OCI-LY7 (cell line): ENCODE measurements at regions of chrX and their contacts with region 1.

Region 1: GRCh38 chrX:57951666-57952319 is 41.5 kb upstream of the ZXDA start:
- DNase-seq: peak; percentile 94
- H3K4me3 ChIP-seq: peak overlapping the region; percentile 45
- H3K27ac ChIP-seq: peak overlapping the region; percentile 97
- H3K4me1 ChIP-seq: peaks cover 35% of the 10 kb centered on the region
- CTCF ChIP-seq: no peak

Region 2: GRCh38 chrX:57595381-57595811 is 356.4 kb before region 1 on chrX:
- CTCF ChIA-PET with region 1: no interaction called
- POLR2A ChIA-PET with region 1: no interaction called
- intact Hi-C with region 1: loop called (anchors 10 kb)
- DNase-seq: no peak
- H3K4me3 ChIP-seq: peak overlapping the region; percentile 42
- H3K27ac ChIP-seq: no peak overlapping the region
- H3K4me1 ChIP-seq: peaks cover 9% of the 10 kb centered on the region
- CTCF ChIP-seq: no peak

Region 3: DNA sequence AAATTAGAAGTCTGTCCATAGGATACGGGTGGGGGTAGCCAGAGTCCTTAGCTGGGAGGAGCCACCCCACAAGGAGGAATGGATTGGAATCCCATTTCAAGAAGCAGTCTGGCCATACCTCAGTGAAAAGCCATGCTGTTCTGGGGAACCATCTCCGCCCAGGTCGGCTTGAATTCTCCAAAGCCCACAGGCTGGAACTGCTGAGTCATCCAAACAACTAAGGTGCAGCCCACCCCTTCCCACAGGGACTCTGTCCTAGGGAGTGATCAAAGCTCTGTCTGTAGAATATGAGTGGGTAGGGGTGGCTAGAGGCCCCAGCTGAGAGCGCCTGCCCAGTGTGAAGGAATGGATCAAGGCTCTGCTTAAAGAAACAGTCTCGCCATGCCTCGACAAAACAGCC is 80.3 kb before region 1 on chrX:
- CTCF ChIA-PET with region 1: no interaction called
- POLR2A ChIA-PET with region 1: no interaction called
- intact Hi-C with region 1: no loop called
- DNase-seq: no peak
- H3K4me3 ChIP-seq: no peak overlapping the region
- H3K27ac ChIP-seq: no peak overlapping the region
- H3K4me1 ChIP-seq: no peaks in the 10 kb centered on the region
- CTCF ChIP-seq: no peak

Region 4: DNA sequence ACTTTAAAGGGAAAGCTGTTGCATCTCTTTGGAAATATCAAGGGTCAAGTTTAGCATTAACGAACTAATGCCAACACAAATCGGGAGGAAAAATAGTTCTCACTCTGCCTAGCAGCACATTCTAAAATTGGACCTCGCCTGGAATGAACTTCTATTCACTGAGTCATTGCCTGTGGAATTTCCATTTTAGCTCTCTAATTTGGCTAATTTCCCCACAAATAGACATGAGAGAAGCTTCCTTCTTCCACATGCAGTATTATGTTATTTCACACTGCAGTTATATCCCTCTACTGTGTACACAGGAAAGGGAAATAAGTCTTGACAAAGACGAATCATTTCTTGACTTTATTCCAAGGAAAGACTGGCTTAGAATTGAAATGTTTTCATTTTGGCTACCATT is 50.8 kb before region 1 on chrX:
- CTCF ChIA-PET with region 1: no interaction called
- POLR2A ChIA-PET with region 1: no interaction called
- intact Hi-C with region 1: no loop called
- DNase-seq: no peak
- H3K4me3 ChIP-seq: no peak overlapping the region
- H3K27ac ChIP-seq: no peak overlapping the region
- H3K4me1 ChIP-seq: no peaks in the 10 kb centered on the region
- CTCF ChIP-seq: no peak

Region 5: DNA sequence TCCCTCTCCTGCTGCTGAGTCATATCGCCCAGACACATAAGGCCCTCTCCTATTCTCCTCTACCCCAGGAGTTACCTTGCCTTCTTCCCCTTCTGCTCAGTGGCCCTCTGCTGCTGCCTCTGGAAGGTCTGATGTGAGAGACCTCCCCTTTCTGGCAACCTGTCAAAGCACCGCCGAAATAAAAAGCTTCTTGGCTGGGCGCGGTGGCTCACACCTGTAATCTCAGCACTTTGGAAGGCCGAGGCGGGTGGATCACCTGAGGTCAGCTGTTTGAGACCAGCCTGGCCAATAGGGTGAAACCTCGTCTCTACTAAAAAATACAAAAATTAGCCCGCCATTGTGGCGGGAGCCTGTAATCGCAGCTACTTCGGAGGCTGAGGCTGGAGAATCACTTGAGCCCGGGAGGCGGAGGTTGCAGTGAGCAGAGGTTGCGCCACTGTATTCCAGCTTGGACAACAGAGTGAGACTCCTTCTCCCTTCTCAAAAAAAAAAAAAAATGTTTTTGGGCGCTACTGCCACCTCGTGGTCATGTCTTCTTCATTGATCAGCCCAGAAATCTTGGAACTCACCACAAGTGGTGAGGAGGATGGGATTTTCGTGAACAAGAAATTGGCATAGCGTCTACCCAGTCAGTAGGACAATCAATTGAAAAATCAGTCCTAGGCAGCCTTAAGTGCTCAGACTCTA is 32.9 kb before region 1 on chrX:
- CTCF ChIA-PET with region 1: no interaction called
- POLR2A ChIA-PET with region 1: no interaction called
- intact Hi-C with region 1: no loop called
- DNase-seq: peak; percentile 36
- H3K4me3 ChIP-seq: no peak overlapping the region
- H3K27ac ChIP-seq: no peak overlapping the region
- H3K4me1 ChIP-seq: no peaks in the 10 kb centered on the region
- CTCF ChIP-seq: peak; percentile 69